ENCODE measurements at regions of chr18 and their contacts with region 1.

Region 1: DNA sequence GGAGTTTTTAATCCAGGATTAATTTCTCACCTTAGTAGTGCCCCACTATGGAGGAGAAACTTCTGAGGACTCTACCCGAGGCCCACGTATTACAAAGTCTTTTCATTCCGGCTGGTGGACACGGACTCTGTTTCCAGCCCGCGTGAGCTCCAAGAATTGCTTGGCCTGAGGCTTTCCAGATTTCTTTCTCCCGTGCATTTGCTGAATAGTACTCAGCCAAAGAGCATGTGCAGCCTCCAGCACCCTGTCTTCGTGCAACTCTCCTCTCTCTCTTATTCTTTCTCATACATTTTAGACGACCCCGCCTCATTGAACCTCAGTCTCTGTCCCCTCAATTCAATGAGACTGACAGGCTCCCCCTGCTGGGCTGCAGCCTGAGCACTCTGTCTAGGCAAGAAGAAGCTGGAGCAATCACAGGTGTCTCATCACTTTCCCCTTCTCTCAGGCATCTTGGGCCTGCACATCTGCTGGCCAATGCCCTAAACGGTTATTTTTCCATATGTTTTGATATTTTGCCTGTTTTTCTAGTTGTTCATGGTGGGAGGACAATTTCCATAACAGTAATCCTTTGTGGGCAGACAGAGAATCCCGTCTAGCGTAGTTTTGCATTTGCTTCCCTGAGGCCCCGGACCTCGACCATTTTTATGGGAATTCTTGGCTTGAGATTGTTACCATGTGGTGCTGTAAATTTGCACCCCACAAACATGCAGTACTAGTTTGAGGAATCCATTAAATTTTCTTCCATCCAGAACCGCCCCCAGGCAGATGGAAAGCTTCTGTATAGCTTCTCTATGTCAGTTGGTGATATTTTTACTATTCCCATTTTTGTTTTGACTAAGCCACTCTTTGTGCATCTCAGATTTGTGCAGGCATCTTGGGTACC is 50.1 kb upstream of the LPIN2 start:
- H3K4me3 ChIP-seq: no peak overlapping the region
- H3K27ac ChIP-seq: no peak overlapping the region
- H3K4me1 ChIP-seq: no peaks in the 10 kb centered on the region
- CTCF ChIP-seq: peak; percentile 61; the same call in 1 of the 2 replicates

Region 2: GRCh38 chr18:2776601-2777000 is 286.4 kb before region 1 on chr18:
- CTCF ChIA-PET with region 1: no interaction called
- POLR2A ChIA-PET with region 1: no interaction called
- H3K4me3 ChIP-seq: no peak overlapping the region
- H3K27ac ChIP-seq: no peak overlapping the region
- H3K4me1 ChIP-seq: no peaks in the 10 kb centered on the region
- CTCF ChIP-seq: no peak

Region 3: DNA sequence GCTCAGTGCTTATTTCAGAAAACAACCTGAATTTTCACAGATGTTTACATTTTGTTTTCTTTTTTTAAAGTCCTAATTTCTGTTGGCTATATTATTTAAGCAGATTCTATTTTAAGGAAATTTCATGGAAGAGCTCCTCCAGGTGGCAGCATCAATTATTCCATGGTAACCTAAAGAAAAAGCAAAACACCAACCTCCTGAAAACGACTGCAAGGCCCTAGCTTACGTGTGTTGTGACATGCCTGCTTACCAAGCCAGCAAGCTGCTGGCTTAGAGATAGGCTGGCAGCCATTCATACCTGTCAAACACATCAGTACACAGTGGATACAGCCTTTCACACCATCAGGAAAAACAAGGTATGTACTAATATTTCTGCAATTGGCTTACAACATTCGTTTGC is 115.0 kb before region 1 on chr18:
- CTCF ChIA-PET with region 1: interaction called, 11 read pairs
- POLR2A ChIA-PET with region 1: no interaction called
- H3K4me3 ChIP-seq: no peak overlapping the region
- H3K27ac ChIP-seq: no peak overlapping the region
- H3K4me1 ChIP-seq: no peaks in the 10 kb centered on the region
- CTCF ChIP-seq: 0 out of 2 replicates have a peak, but pooled peaks have one; percentile 18

Region 4: DNA sequence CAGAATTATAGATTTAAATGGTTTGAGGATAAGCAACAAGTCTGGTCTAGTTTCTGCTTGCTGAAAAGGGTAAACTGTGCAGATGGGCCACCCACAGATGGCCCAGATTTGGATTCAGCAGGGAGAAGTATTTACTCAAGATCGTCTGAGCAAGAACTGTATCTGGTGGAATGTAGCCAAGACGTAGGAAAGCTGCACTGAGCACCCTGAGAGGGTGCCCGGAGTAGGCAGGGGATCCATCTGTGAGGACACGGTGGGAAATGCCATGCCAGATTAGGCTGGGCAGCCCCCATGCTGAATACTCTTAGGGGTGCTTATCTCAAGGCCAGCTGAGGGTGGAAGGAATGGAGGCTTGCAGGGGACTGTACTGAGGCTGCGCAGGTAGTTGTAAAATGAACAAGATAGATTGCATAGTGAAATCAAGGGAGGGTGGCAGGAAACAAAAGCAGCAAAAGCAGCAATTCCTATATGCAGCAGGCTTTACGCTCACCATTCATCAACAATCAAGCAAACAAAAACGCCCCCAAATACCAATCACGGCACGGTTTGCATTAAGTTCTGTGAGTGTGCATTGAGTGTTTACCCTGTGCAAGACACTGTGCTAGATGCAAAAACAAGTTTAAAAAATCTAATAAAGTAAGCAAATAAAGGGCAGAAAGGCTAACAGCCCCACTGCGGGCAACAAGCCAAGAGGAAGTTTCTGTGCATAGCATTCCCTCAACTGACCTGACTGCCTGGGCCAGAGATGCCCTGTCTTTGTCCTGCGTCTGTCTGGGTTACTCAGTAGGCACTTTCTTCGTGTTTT is 17.9 kb before region 1 on chr18:
- CTCF ChIA-PET with region 1: interaction called, 15 read pairs
- POLR2A ChIA-PET with region 1: no interaction called
- H3K4me3 ChIP-seq: no peak overlapping the region
- H3K27ac ChIP-seq: no peak overlapping the region
- H3K4me1 ChIP-seq: peaks cover 13% of the 10 kb centered on the region
- CTCF ChIP-seq: no peak

Region 5: DNA sequence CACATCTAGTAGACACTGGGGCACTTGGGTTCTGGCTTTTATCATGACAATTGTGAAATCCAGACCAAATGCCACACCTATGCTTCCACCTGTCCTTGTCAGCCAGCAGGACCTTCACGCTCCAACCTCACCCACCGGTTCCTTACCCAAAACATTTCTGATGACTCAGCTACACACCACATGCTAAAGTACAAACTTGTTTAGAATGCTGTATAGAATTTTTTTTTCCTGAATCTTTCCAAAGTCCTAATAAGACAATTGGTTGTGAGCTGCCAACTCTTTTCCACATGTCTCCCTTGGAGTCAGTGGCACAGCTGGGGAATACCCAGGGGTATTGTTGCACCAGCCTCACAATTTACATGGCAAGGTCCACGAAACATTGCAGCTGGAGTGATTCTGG is 25.4 kb after region 1 on chr18:
- CTCF ChIA-PET with region 1: interaction called, 12 read pairs
- POLR2A ChIA-PET with region 1: no interaction called
- H3K4me3 ChIP-seq: no peak overlapping the region
- H3K27ac ChIP-seq: no peak overlapping the region
- H3K4me1 ChIP-seq: peaks cover 8% of the 10 kb centered on the region; the same call in 1 of the 2 replicates
- CTCF ChIP-seq: no peak